Breast epithelium (tissue), 4 donors: ENCODE measurements at regions of chr18 and their contacts with region 1.

Region 1: GRCh38 chr18:75374466-75374865 is 53.0 kb downstream of the SMIM21 start:
- DNase-seq: no peak
- H3K4me3 ChIP-seq: no peak overlapping the region
- H3K27ac ChIP-seq: no peak overlapping the region
- H3K4me1 ChIP-seq: no peaks in the 10 kb centered on the region
- H3K27me3 ChIP-seq: no peaks in the 10 kb centered on the region
- CTCF ChIP-seq: no peak
- POLR2A ChIP-seq: no peak

Region 2: DNA sequence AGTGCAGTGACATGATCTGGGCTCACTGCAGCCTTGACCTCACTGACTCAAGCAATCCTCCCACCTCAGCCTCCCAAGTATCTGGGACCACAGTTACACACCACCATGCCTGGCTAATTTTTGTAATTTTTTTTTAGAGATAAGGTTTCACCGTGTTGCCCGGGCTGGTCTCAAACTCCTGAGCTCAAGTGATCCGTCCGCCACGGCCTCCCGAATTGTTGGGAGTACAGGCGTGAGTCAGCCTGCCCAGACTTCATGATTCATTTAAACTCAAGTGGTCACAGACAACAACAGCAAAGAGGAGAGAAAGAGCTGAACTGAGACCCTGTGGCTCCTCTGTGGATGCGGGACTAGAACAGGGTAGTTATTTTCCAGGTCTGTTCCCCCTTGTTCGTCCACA is 80.9 kb before region 1 on chr18:
- intact Hi-C with region 1: no loop called
- DNase-seq: no peak
- H3K4me3 ChIP-seq: no peak overlapping the region
- H3K27ac ChIP-seq: no peak overlapping the region
- H3K4me1 ChIP-seq: no peaks in the 10 kb centered on the region
- H3K27me3 ChIP-seq: no peaks in the 10 kb centered on the region
- CTCF ChIP-seq: no peak
- POLR2A ChIP-seq: no peak

Region 3: DNA sequence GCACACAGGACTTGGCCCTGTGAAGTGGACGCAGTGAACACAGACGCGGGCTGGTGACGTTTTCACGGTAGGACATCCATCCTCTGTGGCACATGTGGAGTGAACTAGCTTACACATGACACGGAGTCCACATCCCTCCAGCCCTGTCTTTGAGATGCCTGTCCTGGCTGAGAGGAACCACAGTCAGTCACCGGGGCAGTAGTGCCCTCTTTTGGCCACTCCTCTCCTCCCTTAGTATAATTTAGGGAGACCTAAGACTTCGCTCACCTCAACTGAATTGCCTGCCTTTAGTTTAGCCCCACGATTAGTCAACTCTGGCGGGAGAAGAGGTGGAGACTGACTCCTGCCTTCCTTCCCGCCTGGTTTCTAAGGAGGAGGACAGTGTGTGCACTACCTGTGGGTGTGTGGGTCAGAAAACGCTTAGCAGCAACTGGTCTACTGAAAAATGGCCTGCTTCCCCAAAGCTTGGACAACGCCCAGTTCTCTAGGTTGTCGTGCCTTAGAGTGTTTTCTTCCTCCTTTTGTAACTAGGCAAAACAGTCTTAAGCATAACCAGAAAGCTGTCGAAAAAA is 1687.6 kb after region 1 on chr18:
- intact Hi-C with region 1: loop called (anchors 5 kb)
- DNase-seq: no peak
- H3K4me3 ChIP-seq: no peak overlapping the region
- H3K27ac ChIP-seq: peak overlapping the region; percentile 60 to 65
- H3K4me1 ChIP-seq: peaks cover 0 to 4% of the 10 kb centered on the region in 2 donors
- H3K27me3 ChIP-seq: no peaks in the 10 kb centered on the region
- CTCF ChIP-seq: no peak
- POLR2A ChIP-seq: no peak